ENCODE measurements at regions of chr3 and their contacts with region 1.

Region 1: GRCh38 chr3:114867835-114868503 is 279.1 kb downstream of the ZBTB20 start:
- DNase-seq: peak in 1 of 3 donors; percentile 32
- H3K4me3 ChIP-seq: no peak overlapping the region
- H3K27ac ChIP-seq: no peak overlapping the region
- H3K4me1 ChIP-seq: peaks cover 0 to 18% (median 4%) of the 10 kb centered on the region in 4 experiments
- H3K27me3 ChIP-seq: no peaks in the 10 kb centered on the region

Region 2: GRCh38 chr3:114879059-114880031 is 11.4 kb after region 1 on chr3:
- CTCF ChIA-PET with region 1: interaction called, 12 read pairs
- POLR2A ChIA-PET with region 1: no interaction called
- DNase-seq: peak in 1 of 3 donors; percentile 58
- H3K4me3 ChIP-seq: peak overlapping the region in 1 of 7 experiments; percentile 31
- H3K27ac ChIP-seq: no peak overlapping the region
- H3K4me1 ChIP-seq: peaks cover 0 to 26% (median 10%) of the 10 kb centered on the region in 4 experiments
- H3K27me3 ChIP-seq: no peaks in the 10 kb centered on the region

Measured in common myeloid progenitor, CD34-positive (primary cell).